ENCODE measurements at regions of chr3 and their contacts with region 1.

Region 1: DNA sequence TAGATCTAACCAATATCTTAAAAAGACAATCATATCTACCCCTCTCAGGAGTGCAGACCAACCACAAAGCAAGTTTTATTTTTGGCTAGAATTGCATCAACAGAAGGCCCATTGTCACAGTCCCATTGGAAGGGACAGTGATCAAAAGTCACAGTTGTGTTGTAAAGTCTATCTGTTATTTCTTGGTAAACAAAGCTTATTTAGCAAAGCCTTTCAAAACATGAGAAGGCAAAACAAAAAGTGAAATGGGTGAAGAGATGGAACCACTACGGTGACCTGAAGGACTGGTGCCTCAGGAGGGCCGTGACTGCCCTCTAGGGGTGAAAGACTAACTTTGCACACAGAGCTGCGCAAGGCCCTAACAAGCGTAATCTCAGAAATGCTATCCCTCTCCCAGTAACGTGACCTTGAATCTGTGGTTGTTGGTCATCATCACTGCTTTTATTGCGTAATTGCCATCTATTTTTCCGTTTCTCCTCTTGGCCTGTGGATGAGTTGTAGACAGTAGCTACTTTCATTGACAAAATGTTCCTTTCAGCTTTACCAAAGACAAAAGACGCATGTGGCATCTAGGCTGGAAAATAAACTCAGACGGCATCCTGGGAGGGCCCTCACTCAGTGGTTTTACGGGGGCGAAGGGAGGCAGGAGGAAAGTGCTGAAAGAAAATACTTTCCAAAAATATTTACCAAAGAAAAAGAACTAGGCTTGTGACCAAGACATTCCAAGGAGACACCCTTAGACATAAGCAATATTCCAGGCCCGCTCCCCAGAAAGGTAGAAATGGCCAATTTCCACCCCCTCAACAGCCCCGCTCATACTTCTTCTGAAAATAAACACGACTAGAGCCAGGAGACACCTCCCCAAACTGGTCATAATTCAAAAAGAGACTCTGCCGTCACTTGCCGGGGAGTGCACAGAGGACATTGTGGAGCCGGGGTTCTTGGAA is 79.4 kb downstream of the FRMD4B start:
- DNase-seq: peak; percentile 27 to 77
- ATAC-seq: peak; percentile 94 to 98
- H3K4me3 ChIP-seq: no peak overlapping the region
- H3K27ac ChIP-seq: no peak overlapping the region
- H3K4me1 ChIP-seq: no peaks in the 10 kb centered on the region
- CTCF ChIP-seq: peak; percentile 79
- EP300 ChIP-seq: no peak
- POLR2A ChIP-seq: no peak
- RAD21 ChIP-seq: peak; percentile 89 to 95

Region 2: DNA sequence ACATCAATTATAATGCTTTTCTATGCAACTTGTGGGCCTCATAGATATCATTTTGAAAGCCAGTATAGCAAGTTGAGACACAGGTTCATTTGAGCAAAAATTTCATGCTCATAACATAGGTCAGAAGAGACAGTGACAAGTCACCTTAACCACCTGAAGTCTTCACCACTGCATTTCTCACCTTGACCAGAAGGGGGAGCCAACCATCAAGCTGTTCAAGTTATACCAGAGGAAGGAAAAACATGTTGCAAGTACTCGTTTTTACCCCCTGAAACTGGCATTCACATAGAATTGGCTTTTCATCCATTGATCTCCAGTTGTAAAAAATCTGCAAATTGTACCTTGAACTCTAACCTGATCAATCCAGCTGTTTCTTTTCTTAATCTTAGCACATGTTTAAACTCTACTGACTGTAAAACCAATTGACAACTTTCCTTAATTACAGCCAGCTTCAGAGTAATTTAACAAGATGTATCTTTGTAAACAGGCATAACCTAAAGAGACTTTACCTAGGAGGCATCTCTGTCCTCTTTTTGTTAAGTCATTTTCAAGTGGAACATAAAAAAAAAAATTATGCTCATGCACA is 185.5 kb before region 1 on chr3:
- CTCF ChIA-PET with region 1: interaction called, 49 read pairs
- POLR2A ChIA-PET with region 1: no interaction called
- DNase-seq: peak; percentile 21 to 85
- ATAC-seq: peak; percentile 64 to 84; a peak in 5 of 6 replicates
- H3K4me3 ChIP-seq: no peak overlapping the region
- H3K27ac ChIP-seq: no peak overlapping the region
- H3K4me1 ChIP-seq: no peaks in the 10 kb centered on the region
- CTCF ChIP-seq: peak; percentile 79
- EP300 ChIP-seq: no peak
- POLR2A ChIP-seq: no peak
- RAD21 ChIP-seq: peak; percentile 72 to 79

Region 3: DNA sequence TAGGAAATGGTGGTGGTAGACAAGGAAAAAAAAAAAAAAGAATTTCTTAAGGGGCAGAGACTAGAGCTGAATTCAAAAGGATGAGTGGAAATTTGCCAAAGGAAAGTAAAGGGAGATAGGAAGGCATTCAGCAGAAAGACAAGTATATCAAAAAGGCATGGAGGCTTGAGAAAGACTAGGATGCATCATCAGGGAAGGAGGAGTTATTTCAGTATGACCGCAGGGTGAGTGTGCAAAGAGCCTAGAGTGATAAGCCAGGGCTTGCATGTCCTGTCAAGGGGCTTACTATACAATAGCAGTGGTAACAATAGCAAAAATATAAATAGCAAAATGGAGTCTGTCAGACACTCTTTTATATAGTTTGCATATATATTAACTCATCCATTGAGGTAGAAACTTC is 32.6 kb before region 1 on chr3:
- CTCF ChIA-PET with region 1: interaction called, 11 read pairs
- POLR2A ChIA-PET with region 1: no interaction called
- DNase-seq: no peak
- ATAC-seq: no peak
- H3K4me3 ChIP-seq: no peak overlapping the region
- H3K27ac ChIP-seq: no peak overlapping the region
- H3K4me1 ChIP-seq: no peaks in the 10 kb centered on the region
- CTCF ChIP-seq: no peak
- EP300 ChIP-seq: no peak
- POLR2A ChIP-seq: no peak
- RAD21 ChIP-seq: no peak

Region 4: GRCh38 chr3:69282181-69282580 is 24.3 kb before region 1 on chr3:
- CTCF ChIA-PET with region 1: interaction called, 11 read pairs
- POLR2A ChIA-PET with region 1: no interaction called
- DNase-seq: no peak
- ATAC-seq: no peak
- H3K4me3 ChIP-seq: no peak overlapping the region
- H3K27ac ChIP-seq: no peak overlapping the region
- H3K4me1 ChIP-seq: no peaks in the 10 kb centered on the region
- CTCF ChIP-seq: no peak
- EP300 ChIP-seq: no peak
- POLR2A ChIP-seq: no peak
- RAD21 ChIP-seq: no peak

Region 5: DNA sequence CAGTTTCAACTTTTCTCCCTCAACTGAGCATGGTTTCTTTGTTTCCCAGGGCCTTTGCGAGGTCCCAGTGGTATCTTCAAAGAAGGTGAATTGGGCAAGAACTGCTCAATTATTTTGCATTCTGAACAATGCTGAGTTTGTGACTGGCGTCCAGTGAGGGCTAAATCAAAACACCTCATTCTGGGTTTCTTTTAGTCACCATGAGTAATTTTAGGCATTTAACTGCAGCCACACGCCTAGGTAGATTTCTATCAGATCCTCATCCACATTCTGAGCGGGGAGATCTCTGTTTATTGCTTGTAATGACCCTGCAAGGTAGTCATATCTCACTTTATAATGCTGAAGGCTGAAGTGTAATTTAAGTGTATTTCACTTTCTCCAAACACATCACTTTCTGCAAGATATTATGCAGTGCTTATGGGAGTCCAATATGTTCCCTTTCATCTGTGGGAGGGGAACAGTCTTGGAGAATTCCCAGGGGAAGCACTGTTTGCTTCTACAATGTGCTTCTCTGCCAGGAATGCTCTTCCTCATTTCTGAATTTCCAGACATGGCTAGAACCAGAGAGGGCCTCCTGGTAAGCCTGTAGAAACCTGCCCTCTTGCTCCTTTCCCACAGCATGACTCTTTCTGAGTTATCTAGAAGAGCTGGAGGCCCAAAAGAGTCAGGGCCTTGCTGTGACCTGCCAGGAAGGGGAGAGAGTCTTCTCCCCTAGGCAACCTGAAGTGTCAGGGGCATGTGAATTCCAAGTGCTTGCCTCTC is 12.3 kb before region 1 on chr3:
- CTCF ChIA-PET with region 1: interaction called, 18 read pairs
- POLR2A ChIA-PET with region 1: no interaction called
- DNase-seq: peak in 1 of 2 experiments; percentile 2
- ATAC-seq: no peak
- H3K4me3 ChIP-seq: no peak overlapping the region
- H3K27ac ChIP-seq: no peak overlapping the region
- H3K4me1 ChIP-seq: 0 out of 3 replicates have a peak, but pooled peaks cover 3% of the 10 kb centered on the region
- CTCF ChIP-seq: no peak
- EP300 ChIP-seq: no peak
- POLR2A ChIP-seq: no peak
- RAD21 ChIP-seq: no peak

Region 6: GRCh38 chr3:69320871-69321271 is 14.4 kb after region 1 on chr3:
- CTCF ChIA-PET with region 1: interaction called, 15 read pairs
- POLR2A ChIA-PET with region 1: no interaction called
- DNase-seq: no peak
- ATAC-seq: no peak
- H3K4me3 ChIP-seq: no peak overlapping the region
- H3K27ac ChIP-seq: no peak overlapping the region
- H3K4me1 ChIP-seq: no peaks in the 10 kb centered on the region
- CTCF ChIP-seq: no peak
- EP300 ChIP-seq: no peak
- POLR2A ChIP-seq: no peak
- RAD21 ChIP-seq: no peak

Region 7: GRCh38 chr3:69594286-69594685 is 287.8 kb after region 1 on chr3:
- CTCF ChIA-PET with region 1: no interaction called
- POLR2A ChIA-PET with region 1: no interaction called
- DNase-seq: no peak
- ATAC-seq: no peak
- H3K4me3 ChIP-seq: no peak overlapping the region
- H3K27ac ChIP-seq: no peak overlapping the region
- H3K4me1 ChIP-seq: no peaks in the 10 kb centered on the region
- CTCF ChIP-seq: no peak
- EP300 ChIP-seq: no peak
- POLR2A ChIP-seq: no peak
- RAD21 ChIP-seq: no peak

Region 8: DNA sequence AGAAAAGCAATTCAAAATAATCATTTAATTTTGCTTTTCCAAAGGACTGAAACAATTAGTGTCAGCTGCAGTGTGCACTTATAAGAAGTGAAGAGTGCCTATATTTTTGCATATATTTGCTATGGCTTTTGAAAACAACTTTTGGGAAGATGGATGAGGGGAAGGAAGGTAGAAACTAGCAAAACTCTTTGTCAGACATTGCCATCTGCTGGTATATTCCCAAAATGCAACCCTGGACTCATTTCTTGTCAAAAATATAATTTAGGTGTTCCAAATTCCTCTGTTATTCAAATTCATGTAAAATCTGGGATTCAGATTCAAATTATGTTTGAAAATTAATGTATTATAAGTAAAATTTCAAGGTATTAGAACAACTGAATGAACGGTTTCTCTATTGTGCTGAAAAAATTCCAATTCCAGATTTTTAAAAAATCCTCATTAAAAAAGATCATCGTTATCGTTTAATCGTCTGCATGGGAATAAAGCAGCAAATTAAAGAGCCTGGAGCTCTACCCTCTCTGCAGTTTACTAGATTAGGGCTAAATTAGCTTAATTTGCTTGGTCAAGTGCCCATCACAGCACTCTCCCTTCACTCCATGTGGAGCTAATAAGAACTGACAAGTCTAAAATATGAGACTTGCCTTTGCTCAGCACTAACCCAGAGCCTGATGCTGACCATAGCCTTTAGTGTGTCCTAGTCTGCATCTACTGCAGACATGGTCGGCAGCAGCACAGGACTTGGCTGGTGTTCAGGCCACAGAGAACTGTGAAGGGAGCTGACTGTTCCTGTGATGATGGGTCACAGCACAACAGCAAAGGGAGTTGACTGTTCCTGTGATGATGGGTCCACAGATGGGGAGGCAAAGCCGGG is 364.8 kb after region 1 on chr3:
- CTCF ChIA-PET with region 1: interaction called, 10 read pairs
- POLR2A ChIA-PET with region 1: no interaction called
- DNase-seq: peak; percentile 42 to 60
- ATAC-seq: peak; percentile 53 to 67; a peak in 3 of 6 replicates
- H3K4me3 ChIP-seq: no peak overlapping the region
- H3K27ac ChIP-seq: no peak overlapping the region
- H3K4me1 ChIP-seq: no peaks in the 10 kb centered on the region; the same call in 2 of the 3 replicates
- CTCF ChIP-seq: peak; percentile 84
- EP300 ChIP-seq: no peak
- POLR2A ChIP-seq: no peak
- RAD21 ChIP-seq: peak; percentile 88 to 89

Measured in A549 (cell line).